ENCODE measurements at regions of chr1 and their contacts with region 1.

Region 1: DNA sequence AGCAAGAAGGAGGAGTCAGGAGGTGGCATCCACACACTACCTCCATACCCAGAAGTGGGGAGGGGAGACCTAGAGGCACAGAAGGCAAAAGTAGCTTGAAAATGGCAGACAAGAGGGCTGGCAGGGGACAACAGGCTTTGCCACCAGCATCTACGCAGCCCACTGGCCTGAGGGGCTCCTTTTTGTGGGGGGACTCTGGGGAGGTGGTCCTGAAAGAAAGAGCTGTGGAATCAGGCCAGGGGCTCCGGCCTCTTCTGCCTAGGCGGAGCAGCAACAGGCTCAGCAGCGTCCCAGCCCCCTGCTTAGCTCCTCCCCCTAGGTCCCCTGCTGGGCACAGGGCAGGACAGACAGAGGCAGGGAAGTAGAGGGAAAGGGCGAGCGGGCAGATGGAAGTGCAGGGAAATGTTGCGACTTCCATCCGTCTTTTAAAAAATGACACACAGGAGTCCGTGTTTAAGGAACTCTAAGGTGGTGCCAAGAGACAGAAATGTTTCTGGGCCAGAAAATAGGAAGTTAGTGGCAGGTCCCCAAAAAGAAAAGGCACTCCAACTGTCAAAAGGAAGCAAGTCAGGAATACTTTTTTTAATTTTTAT is 10.0 kb upstream of the LEFTY2 start:
- DNase-seq: peak; percentile 76

Region 2: DNA sequence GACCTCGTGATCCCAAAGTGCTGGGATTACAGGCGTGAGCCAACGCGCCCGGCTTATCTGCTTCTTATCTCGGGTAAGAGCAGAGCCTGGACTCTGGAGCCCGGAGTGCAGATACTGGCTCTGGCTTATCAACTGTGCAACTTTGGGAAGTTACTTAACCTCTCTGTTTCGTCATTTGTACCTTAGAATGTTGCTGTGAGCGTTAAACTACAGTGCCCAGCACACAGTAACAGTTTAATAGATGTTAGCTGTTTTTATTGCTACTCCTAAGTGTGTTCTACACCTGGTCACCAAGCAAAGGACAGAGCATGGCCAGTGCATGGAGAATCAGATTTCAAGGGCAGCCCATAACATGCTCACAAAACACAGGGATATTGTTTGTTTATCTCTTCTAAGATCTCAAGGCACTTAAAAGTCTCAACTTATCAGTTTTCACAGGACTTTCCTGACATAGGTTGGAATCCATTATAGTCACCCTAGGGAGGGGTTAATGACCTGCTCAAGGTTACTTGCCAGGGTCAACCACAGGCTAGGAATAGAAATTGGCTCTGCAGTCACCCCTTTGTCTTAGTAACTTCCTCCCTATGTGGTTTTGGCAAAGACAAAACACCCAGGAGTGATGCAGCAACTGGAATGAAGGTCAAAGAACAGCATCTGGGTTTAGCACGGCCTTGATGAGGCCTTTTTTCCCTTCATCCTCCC is 195.9 kb before region 1 on chr1:
- CTCF ChIA-PET with region 1: no interaction called
- POLR2A ChIA-PET with region 1: no interaction called
- DNase-seq: no peak

Region 3: GRCh38 chr1:225962440-225962975 is 11.5 kb after region 1 on chr1:
- CTCF ChIA-PET with region 1: interaction called, 16 read pairs
- POLR2A ChIA-PET with region 1: interaction called, 3 read pairs
- DNase-seq: peak; percentile 93

Measured in HEK293T (cell line).